Lower leg skin (tissue), 4 donors: ENCODE measurements at regions of chr11 and their contacts with region 1.

Region 1: GRCh38 chr11:36509694-36510566 is at the start of gene TRAF6:
- DNase-seq: peak; percentile 79 to 97
- H3K4me3 ChIP-seq: peak within 1 kb of the TSS; percentile 96
- CTCF ChIP-seq: peak in 1 of 3 donors; percentile 75
- POLR2A ChIP-seq: no peak
- total RNA-seq, gene TRAF6: 10.7 to 16.0 (median 13.3) TPM

Region 2: DNA sequence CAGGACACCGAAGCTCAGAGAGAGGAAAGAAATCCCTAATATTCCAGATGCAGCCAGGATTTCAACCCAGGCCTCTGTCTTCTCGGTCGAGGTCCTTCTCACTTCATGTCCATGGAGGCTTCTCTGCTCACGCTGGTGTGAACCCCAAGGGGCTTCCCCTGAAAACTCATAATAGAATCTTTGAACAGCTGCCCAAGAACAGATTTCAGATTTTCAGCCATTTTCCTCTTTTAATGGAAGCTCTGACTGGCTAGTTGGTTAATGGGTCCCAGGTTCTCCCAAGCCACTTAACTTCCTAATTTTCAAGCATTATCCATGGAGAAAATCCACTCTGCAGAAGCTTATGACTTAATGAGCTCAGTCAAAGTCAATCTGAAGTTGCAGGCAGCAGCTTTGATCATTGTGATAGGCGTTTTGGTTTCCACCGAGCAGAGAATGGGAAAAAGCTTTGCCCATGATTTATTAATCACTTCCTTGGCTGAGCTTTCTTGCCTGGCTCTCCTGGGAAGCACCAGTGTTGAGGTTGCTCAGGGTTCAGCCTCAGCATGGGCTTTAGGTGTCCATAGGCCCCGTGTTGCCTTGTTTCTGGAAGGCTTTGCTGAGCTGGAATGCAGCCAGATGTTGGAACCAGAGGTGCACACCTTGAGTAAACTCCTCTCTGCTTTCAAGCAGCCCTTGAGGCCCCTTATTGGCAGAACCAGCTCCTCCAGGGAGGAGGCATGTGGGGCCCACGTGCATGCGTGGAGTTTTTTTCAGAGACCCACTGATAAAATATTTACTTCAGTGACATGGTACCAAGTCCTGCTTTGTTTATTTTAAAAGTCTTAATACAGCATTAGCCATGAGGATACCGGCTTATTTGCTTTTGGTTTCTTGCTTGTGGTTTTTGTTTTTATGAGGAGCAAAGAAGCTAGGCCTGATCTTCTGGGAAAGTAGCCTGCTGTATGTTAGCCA is 540.6 kb before region 1 on chr11:
- intact Hi-C with region 1: loop called (anchors 5 kb)
- DNase-seq: no peak
- H3K4me3 ChIP-seq: no peak overlapping the region
- CTCF ChIP-seq: no peak
- POLR2A ChIP-seq: no peak